ENCODE measurements at regions of chr1 and their contacts with region 1.

Region 1: GRCh38 chr1:101238681-101239094 is 1.9 kb downstream of the S1PR1 start:
- DNase-seq: no peak
- ATAC-seq: peak; percentile 70
- H3K4me3 ChIP-seq: peak overlapping the region; percentile 81
- H3K27ac ChIP-seq: peak overlapping the region; percentile 43
- H3K4me1 ChIP-seq: peaks cover 32% of the 10 kb centered on the region
- H3K27me3 ChIP-seq: no peaks in the 10 kb centered on the region
- CTCF ChIP-seq: peak; percentile 90 to 99 (median 97)
- EP300 ChIP-seq: no peak
- POLR2A ChIP-seq: 0 out of 2 replicates have a peak, but pooled peaks have one; percentile 9
- RAD21 ChIP-seq: peak; percentile 89

Region 2: GRCh38 chr1:100834777-100835660 is 403.7 kb before region 1 on chr1:
- CTCF ChIA-PET with region 1: no interaction called
- POLR2A ChIA-PET with region 1: no interaction called
- RAD21 ChIA-PET with region 1: no interaction called
- SMC1A ChIA-PET with region 1: no interaction called
- in situ Hi-C with region 1: no loop called
- intact Hi-C with region 1: no loop called
- DNase-seq: no peak
- ATAC-seq: peak; percentile 84
- H3K4me3 ChIP-seq: no peak overlapping the region
- H3K27ac ChIP-seq: no peak overlapping the region
- H3K4me1 ChIP-seq: no peaks in the 10 kb centered on the region
- H3K27me3 ChIP-seq: no peaks in the 10 kb centered on the region
- CTCF ChIP-seq: peak; percentile 35 to 56 (median 55); a peak in 5 of 6 replicates
- EP300 ChIP-seq: no peak
- POLR2A ChIP-seq: no peak
- RAD21 ChIP-seq: peak; percentile 52

Region 3: DNA sequence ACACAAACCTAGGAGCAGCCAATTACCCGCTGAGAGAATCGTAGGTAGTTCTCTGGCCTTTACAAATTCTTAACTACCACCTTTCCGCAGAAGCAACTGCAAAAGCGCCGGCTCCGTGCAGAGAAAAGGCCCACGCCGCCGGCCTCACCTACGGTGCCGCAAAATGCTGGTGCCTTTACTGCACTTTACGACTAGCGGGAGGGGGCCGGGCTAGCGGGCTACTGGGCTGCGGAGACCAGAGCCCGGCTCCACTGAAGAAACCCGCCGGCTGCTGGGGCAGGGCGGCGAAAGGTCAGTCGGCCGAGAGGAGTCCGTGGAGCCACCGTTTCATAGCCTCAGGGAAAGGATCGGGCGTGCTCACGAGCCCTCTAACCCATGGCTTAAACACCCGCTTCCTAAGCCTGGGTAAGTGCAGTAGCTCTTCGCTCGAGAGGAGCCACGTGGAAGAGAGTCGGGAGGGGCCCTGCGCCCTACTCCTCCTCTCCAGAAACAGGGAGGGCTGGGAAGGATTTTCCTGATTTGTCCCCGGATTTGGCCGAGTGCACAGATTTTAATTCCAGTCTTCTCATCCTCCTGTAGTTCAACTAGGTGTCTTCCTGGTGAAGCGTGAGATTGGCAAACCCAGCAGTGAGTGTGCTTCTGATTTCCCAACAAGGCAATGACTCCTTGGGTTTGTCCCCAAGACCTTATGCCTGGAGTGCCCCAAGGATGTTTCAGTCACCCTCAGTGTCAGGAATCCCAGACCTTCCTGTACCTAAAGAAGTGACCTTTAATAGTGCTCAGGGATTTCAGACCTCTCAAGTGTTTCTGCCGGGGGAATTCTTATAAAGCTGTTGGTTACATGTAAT is 212.8 kb before region 1 on chr1 and contains the start of gene DPH5:
- CTCF ChIA-PET with region 1: interaction called, 5 read pairs
- POLR2A ChIA-PET with region 1: no interaction called
- RAD21 ChIA-PET with region 1: interaction called, 5 read pairs
- SMC1A ChIA-PET with region 1: interaction called, 4 read pairs
- in situ Hi-C with region 1: no loop called
- intact Hi-C with region 1: loop called (anchors 5 kb)
- DNase-seq: peak; percentile 66
- ATAC-seq: peak; percentile 88
- H3K4me3 ChIP-seq: peak within 1 kb of the TSS; percentile 74
- H3K27ac ChIP-seq: peak within 1 kb of the TSS; percentile 94
- H3K4me1 ChIP-seq: peaks cover 18% of the 10 kb centered on the region
- H3K27me3 ChIP-seq: no peaks in the 10 kb centered on the region
- CTCF ChIP-seq: no peak
- EP300 ChIP-seq: no peak
- POLR2A ChIP-seq: peak; percentile 98
- RAD21 ChIP-seq: peak; percentile 24; the same call in 1 of the 2 replicates
- polyA plus RNA-seq, gene DPH5: 83.7 to 95.7 TPM

Region 4: GRCh38 chr1:101148980-101149379 is 89.7 kb before region 1 on chr1:
- CTCF ChIA-PET with region 1: interaction called, 13 read pairs
- POLR2A ChIA-PET with region 1: interaction called, 6 read pairs
- RAD21 ChIA-PET with region 1: interaction called, 3 read pairs
- SMC1A ChIA-PET with region 1: interaction called, 3 read pairs
- in situ Hi-C with region 1: no loop called
- intact Hi-C with region 1: no loop called
- DNase-seq: no peak
- ATAC-seq: no peak
- H3K4me3 ChIP-seq: no peak overlapping the region
- H3K27ac ChIP-seq: no peak overlapping the region
- H3K4me1 ChIP-seq: peaks cover 6% of the 10 kb centered on the region
- H3K27me3 ChIP-seq: no peaks in the 10 kb centered on the region
- CTCF ChIP-seq: no peak
- EP300 ChIP-seq: no peak
- POLR2A ChIP-seq: no peak
- RAD21 ChIP-seq: no peak

Region 5: GRCh38 chr1:101221945-101222429 is 16.7 kb before region 1 on chr1:
- CTCF ChIA-PET with region 1: interaction called, 9 read pairs
- POLR2A ChIA-PET with region 1: interaction called, 4 read pairs
- RAD21 ChIA-PET with region 1: interaction called, 7 read pairs
- SMC1A ChIA-PET with region 1: interaction called, 15 read pairs
- in situ Hi-C with region 1: no loop called
- intact Hi-C with region 1: no loop called
- DNase-seq: peak; percentile 67
- ATAC-seq: peak; percentile 97
- H3K4me3 ChIP-seq: no peak overlapping the region
- H3K27ac ChIP-seq: peak overlapping the region; percentile 63
- H3K4me1 ChIP-seq: peaks cover 12% of the 10 kb centered on the region
- H3K27me3 ChIP-seq: no peaks in the 10 kb centered on the region
- CTCF ChIP-seq: no peak
- EP300 ChIP-seq: 0 out of 4 replicates have a peak, but pooled peaks of 1 of the 2 experiments have one; percentile 48
- POLR2A ChIP-seq: no peak
- RAD21 ChIP-seq: no peak

Region 6: DNA sequence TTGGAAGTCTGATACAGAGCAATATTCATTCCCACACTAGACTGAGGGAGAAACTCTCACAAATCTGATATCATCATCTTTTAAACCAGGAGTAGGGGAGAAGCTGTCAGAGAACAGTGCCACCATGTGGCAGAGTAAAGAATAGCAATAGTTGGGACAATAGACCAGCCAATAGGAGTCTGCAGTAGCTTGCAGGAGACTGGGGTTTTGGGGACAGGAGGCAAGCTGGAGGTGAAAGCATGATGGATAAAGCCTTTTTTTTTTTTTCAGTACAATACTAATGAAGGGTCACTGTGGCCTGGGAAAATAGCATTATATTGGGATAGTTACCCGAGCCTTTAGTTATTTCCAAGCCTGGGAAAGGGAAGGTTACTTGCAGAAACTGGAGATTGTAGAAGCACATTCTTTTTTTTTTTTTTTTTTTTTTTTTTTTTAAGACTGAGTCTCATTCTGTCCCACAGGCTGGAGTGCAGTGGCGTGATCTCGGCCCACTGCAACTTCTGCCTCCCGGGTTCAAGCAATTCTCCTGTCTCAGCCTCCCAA is 118.8 kb after region 1 on chr1:
- CTCF ChIA-PET with region 1: interaction called, 21 read pairs
- POLR2A ChIA-PET with region 1: no interaction called
- RAD21 ChIA-PET with region 1: interaction called, 12 read pairs
- SMC1A ChIA-PET with region 1: interaction called, 5 read pairs
- in situ Hi-C with region 1: no loop called
- intact Hi-C with region 1: loop called (anchors 5 kb)
- DNase-seq: peak; percentile 95
- ATAC-seq: peak; percentile 99
- H3K4me3 ChIP-seq: no peak overlapping the region
- H3K27ac ChIP-seq: peak overlapping the region; percentile 75
- H3K4me1 ChIP-seq: peaks cover 7% of the 10 kb centered on the region; the same call in 1 of the 2 replicates
- H3K27me3 ChIP-seq: no peaks in the 10 kb centered on the region
- CTCF ChIP-seq: peak; percentile 79 to 92 (median 89)
- EP300 ChIP-seq: no peak
- POLR2A ChIP-seq: no peak
- RAD21 ChIP-seq: peak; percentile 93